Activated naive CD4-positive, alpha-beta T cell treated with anti-CD3 and anti-CD28 coated beads, Interleukin-2, amount 10 ng/mL, durations not matched to agents 7 days and 5 days (primary cell): ENCODE measurements at regions of chr3 and their contacts with region 1.

Region 1: GRCh38 chr3:10738688-10739372 is 77.2 kb upstream of the SLC6A11 start:
- DNase-seq: peak; percentile 78
- H3K4me3 Mint-ChIP-seq: no peak overlapping the region
- H3K27ac Mint-ChIP-seq: no peak overlapping the region
- H3K4me1 Mint-ChIP-seq: no peaks in the 10 kb centered on the region
- H3K27me3 Mint-ChIP-seq: peaks cover 30% of the 10 kb centered on the region

Region 2: GRCh38 chr3:10338591-10339353 is 400.1 kb before region 1 on chr3:
- CTCF ChIA-PET with region 1: interaction called, 24 read pairs
- DNase-seq: no peak
- H3K4me3 Mint-ChIP-seq: no peak overlapping the region
- H3K27ac Mint-ChIP-seq: no peak overlapping the region
- H3K4me1 Mint-ChIP-seq: peaks cover 6% of the 10 kb centered on the region
- H3K27me3 Mint-ChIP-seq: peaks cover 9% of the 10 kb centered on the region

Region 3: DNA sequence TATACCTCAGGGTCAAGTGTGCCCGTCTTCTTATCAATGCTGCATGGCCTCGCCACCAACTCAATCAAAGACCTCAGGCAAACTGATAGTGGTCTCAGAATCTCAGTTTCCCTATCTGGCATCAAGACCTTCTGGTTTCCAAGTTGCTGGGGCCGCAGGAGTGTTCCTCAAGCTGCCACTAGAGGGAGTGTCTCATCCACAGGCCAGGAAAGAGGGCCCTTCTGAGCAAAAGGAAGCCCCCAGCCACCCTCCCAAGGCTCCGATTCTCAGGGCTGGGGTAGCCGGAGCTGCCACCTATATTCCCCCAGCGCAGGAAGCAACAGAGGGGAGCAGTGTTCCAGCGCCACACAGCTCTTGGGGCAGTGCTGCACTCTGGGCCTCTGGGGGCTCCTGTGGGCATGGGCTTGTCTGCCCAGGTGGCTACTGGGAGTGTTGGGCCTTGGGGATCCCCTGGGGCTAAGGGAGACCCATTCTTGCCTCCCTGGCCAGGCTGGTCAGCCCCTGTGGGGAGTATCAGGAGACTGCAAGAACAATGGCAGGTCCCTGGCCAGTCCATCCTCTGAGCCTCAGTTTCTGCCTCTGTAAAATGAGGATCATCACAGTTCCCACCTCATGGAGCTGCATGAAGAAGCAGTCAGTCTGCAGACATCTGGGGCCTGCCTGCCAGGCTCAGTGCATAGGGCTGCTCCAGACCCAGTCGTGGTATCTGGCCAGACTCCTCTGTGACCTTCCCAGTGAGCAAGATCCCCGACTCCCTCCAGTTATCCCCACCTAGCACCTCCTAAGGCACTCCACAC is 394.5 kb before region 1 on chr3:
- CTCF ChIA-PET with region 1: interaction called, 24 read pairs
- DNase-seq: peak; percentile 69
- H3K4me3 Mint-ChIP-seq: no peak overlapping the region
- H3K27ac Mint-ChIP-seq: no peak overlapping the region
- H3K4me1 Mint-ChIP-seq: no peaks in the 10 kb centered on the region
- H3K27me3 Mint-ChIP-seq: peaks cover 4% of the 10 kb centered on the region

Region 4: GRCh38 chr3:10417849-10418248 is 321.0 kb before region 1 on chr3:
- CTCF ChIA-PET with region 1: interaction called, 27 read pairs
- DNase-seq: no peak
- H3K4me3 Mint-ChIP-seq: no peak overlapping the region
- H3K27ac Mint-ChIP-seq: no peak overlapping the region
- H3K4me1 Mint-ChIP-seq: peaks cover 9% of the 10 kb centered on the region
- H3K27me3 Mint-ChIP-seq: peaks cover 53% of the 10 kb centered on the region